IMR-90 (cell line): ENCODE measurements at regions of chr12 and their contacts with region 1.

Region 1: GRCh38 chr12:123580772-123581171 is 3.6 kb upstream of the TMED2 start:
- DNase-seq: peak; percentile 42
- ATAC-seq: no peak
- H3K4me3 ChIP-seq: no peak overlapping the region
- H3K27ac ChIP-seq: no peak overlapping the region
- H3K4me1 ChIP-seq: peaks cover 2% of the 10 kb centered on the region; the same call in 1 of the 2 replicates
- H3K27me3 ChIP-seq: no peaks in the 10 kb centered on the region
- CTCF ChIP-seq: no peak
- POLR2A ChIP-seq: no peak
- RAD21 ChIP-seq: no peak

Region 2: DNA sequence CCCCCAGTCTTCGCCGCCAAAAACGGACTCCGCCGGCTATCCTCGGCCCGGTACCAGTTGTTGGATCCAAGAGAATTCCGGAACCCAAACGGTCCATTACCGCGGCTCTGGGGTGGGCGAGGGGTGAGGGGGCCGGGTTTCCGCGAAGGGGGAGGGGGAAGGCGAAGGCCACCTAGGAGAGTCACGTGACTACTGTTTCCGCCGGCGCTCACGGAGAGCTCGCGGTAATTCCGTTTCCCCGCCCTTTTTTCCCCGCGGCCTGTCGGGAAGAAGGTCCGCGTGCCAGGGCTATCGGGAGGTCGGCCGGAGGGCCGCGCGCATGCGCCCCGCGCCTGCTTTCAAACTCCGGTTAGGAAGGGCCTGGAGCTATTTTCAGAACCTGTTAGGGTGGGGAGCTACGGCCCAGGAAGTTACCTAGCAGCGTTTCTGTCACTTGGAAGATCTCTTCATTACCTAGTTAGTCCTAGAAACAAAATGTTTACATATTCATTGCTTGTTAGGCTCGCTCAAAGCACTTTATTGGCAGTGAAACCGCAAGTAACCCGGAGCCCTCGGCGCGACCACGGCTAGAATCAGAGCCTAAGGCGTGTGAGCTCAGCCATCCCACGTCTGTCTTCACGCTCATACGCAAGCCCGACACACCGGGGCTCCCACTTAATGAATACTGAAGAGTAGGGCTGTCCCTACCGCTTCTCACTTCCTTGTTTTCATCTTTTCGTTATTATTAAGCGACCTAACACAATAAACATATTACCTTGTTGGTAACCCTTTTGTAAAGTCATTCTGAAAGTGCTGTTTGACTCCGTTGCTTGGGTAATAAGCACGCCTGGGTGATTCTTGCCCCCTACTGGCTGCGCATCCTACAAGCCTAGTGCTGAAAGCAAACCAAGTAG is 215.5 kb before region 1 on chr12:
- CTCF ChIA-PET with region 1: no interaction called
- POLR2A ChIA-PET with region 1: no interaction called
- dilution Hi-C with region 1: no loop called
- in situ Hi-C with region 1: no loop called
- intact Hi-C with region 1: loop called (anchors 2 kb)
- DNase-seq: peak; percentile 98
- ATAC-seq: peak; percentile 79
- H3K4me3 ChIP-seq: peak overlapping the region; percentile 84
- H3K27ac ChIP-seq: peak overlapping the region; percentile 100
- H3K4me1 ChIP-seq: no peaks in the 10 kb centered on the region
- H3K27me3 ChIP-seq: no peaks in the 10 kb centered on the region
- CTCF ChIP-seq: peak; percentile 80
- POLR2A ChIP-seq: peak; percentile 45
- RAD21 ChIP-seq: peak; percentile 55

Region 3: GRCh38 chr12:123388177-123388947 is 192.4 kb before region 1 on chr12:
- CTCF ChIA-PET with region 1: no interaction called
- POLR2A ChIA-PET with region 1: interaction called, 11 read pairs
- dilution Hi-C with region 1: no loop called
- in situ Hi-C with region 1: no loop called
- intact Hi-C with region 1: no loop called
- DNase-seq: peak; percentile 52
- ATAC-seq: peak; percentile 62
- H3K4me3 ChIP-seq: peak overlapping the region; percentile 99
- H3K27ac ChIP-seq: peak overlapping the region; percentile 85
- H3K4me1 ChIP-seq: peaks cover 13% of the 10 kb centered on the region
- H3K27me3 ChIP-seq: no peaks in the 10 kb centered on the region
- CTCF ChIP-seq: no peak
- POLR2A ChIP-seq: no peak
- RAD21 ChIP-seq: no peak

Region 4: DNA sequence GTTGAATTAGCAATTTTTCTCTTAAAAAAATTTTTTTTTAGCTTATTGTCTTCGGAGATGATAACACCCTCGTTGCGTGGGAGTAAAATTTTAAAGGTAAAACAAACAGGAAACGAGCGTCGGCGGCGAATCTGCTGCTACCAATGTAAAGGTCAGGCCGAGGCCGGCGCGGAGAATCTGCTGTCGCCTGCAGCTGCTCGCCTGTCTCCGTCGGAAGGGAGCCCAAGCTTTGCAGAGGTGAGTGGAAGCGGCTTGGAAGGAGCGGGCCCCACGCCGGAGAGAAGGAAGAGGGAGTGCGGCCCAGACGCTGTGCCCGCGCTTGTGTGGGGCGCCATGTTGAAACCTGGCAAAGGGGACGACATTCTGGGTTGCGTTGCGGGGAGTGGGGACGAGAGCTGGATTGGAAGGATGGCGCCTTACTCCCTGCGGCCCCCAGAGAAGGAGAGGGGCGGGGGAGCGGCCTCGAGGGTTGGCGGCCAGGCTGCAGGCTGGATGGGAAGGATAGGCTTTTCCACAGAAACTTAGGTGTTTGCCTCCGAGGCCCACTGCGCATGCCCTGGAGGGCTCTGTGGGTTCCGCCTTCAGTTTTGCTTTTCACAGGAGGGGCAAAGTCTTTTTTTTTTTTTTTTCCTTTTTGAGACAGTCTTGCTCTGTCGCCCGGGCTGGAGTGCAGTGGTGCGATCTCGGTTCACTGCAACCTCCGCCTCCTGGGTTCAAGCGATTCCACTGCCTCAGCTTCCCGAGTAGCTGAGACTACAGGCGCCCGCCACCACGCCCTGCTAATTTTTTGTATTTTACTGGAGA is 122.6 kb before region 1 on chr12 and contains the start of gene SNRNP35:
- CTCF ChIA-PET with region 1: no interaction called
- POLR2A ChIA-PET with region 1: no interaction called
- dilution Hi-C with region 1: no loop called
- in situ Hi-C with region 1: no loop called
- intact Hi-C with region 1: loop called (anchors 1 kb)
- DNase-seq: peak; percentile 74
- ATAC-seq: peak; percentile 84
- H3K4me3 ChIP-seq: peak within 1 kb of the TSS; percentile 93
- H3K27ac ChIP-seq: peak within 1 kb of the TSS; percentile 100
- H3K4me1 ChIP-seq: no peaks in the 10 kb centered on the region; the same call in 1 of the 2 replicates
- H3K27me3 ChIP-seq: no peaks in the 10 kb centered on the region
- CTCF ChIP-seq: no peak
- POLR2A ChIP-seq: peak; percentile 29
- RAD21 ChIP-seq: no peak
- total RNA-seq, gene SNRNP35: 4.7 and 10.6 TPM in 2 replicates

Region 5: DNA sequence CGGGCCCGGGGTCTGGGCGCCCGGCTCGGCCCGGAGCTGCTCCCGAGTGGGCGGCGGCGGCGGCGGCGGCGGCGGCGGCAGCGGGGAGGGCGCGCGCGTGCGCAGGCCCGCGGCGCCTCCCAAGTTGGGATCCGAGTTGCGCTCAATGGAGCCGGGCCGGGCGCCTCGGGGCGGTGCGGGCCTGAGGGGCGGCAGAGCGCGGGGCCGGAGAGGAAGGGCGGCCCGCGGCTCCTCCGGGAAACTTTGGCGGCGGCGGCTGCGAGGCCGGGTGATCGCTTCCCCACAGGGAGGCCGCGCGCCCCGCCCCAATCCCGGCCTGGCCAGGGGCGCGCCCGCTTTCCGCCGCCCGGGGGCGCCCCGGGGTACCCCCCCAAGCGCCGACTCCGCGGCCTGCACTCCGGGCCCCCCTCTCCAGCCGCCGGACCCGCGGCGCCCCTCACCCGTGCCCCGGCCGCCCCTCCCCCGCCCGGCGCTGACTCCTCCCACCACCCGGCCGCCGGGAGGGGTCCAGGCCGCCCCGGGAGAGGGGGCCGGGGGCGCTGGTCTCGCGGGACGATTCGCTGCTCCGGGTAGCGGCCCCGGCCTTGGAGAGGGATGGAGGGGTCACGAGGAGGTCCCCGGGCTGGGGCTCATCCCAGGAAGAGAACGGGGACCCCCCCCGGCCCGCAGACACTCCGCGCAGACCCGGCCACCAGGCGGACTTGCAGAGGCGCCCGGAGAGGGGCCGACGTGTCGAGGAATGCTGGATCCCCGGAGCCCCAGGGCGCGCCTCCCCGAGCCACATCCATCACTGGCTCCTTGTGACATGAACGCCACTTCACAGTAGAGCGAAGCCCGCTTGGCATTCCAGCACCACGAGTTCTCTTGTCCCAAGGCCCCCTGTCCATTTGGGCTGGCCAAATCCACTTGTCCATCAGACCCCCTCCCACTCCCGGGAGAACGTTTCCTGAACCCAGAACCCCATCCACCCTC is 46.8 kb before region 1 on chr12 and contains the start of gene RILPL1:
- CTCF ChIA-PET with region 1: no interaction called
- POLR2A ChIA-PET with region 1: no interaction called
- dilution Hi-C with region 1: no loop called
- in situ Hi-C with region 1: loop called (anchors 5 kb)
- intact Hi-C with region 1: loop called (anchors 1 kb)
- DNase-seq: peak; percentile 32
- ATAC-seq: peak; percentile 80
- H3K4me3 ChIP-seq: peak within 1 kb of the TSS; percentile 73
- H3K27ac ChIP-seq: peak within 1 kb of the TSS; percentile 67
- H3K4me1 ChIP-seq: peaks cover 9% of the 10 kb centered on the region
- H3K27me3 ChIP-seq: peaks cover 2% of the 10 kb centered on the region
- CTCF ChIP-seq: peak; percentile 48
- POLR2A ChIP-seq: no peak; the same call in 1 of the 2 replicates
- RAD21 ChIP-seq: no peak; the same call in 1 of the 2 replicates
- total RNA-seq, gene RILPL1: 11.1 and 14.2 TPM in 2 replicates

Region 6: DNA sequence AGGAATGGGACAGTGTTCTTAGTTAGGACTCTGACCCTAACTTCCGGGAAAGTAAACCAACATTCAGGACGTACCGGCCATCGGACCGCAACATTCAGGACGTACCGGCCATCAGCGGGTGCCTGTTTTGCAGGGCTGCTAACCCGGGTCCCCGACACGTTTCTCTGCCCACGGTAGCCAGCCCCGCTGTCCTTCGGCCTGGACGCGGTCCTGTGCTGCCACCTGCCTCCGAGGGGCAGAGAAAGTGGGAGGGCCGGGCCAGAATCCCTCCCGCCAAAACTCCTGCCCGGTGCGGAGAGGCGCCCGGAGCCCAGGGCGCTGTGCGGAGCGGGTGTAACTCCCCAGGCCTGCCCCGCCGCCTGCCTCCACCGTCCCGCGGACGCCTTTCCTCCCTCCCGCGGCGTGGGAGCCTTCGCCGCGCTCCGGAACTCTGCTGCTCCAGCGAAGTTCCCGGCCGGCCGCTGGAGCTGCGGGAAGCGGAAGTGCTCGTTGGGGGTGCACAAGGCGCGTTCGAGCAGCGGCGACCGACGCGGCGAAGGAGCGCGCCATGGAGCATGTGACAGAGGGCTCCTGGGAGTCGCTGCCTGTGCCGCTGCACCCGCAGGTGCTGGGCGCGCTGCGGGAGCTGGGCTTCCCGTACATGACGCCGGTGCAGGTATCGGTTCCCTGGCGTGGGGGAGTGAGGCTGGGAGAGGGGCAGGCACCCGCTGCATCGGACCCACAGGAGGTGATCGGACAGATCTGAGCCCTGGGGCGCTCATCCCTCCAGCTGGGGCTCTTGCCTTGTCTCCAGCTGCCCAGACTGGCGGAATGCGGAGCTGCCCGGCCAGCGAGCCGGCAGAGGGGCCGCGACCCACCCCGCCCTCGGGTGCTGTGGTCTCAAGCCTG is 21.1 kb after region 1 on chr12 and contains the start of gene DDX55:
- CTCF ChIA-PET with region 1: no interaction called
- POLR2A ChIA-PET with region 1: no interaction called
- dilution Hi-C with region 1: no loop called
- in situ Hi-C with region 1: no loop called
- intact Hi-C with region 1: no loop called
- DNase-seq: peak; percentile 79
- ATAC-seq: peak; percentile 96
- H3K4me3 ChIP-seq: peak within 1 kb of the TSS; percentile 88
- H3K27ac ChIP-seq: peak within 1 kb of the TSS; percentile 82
- H3K4me1 ChIP-seq: peaks cover 4% of the 10 kb centered on the region; the same call in 1 of the 2 replicates
- H3K27me3 ChIP-seq: no peaks in the 10 kb centered on the region
- CTCF ChIP-seq: peak; percentile 43
- POLR2A ChIP-seq: peak; percentile 73
- RAD21 ChIP-seq: peak; percentile 47
- total RNA-seq, gene DDX55: 13.3 and 14.4 TPM in 2 replicates

Region 7: GRCh38 chr12:124480469-124481256 is 899.9 kb after region 1 on chr12:
- CTCF ChIA-PET with region 1: no interaction called
- POLR2A ChIA-PET with region 1: no interaction called
- dilution Hi-C with region 1: no loop called
- in situ Hi-C with region 1: no loop called
- intact Hi-C with region 1: no loop called
- DNase-seq: peak; percentile 47
- ATAC-seq: peak; percentile 62
- H3K4me3 ChIP-seq: no peak overlapping the region
- H3K27ac ChIP-seq: no peak overlapping the region
- H3K4me1 ChIP-seq: peaks cover 7% of the 10 kb centered on the region; the same call in 1 of the 2 replicates
- H3K27me3 ChIP-seq: no peaks in the 10 kb centered on the region
- CTCF ChIP-seq: no peak
- POLR2A ChIP-seq: no peak
- RAD21 ChIP-seq: no peak